ENCODE measurements at regions of chr7 and their contacts with region 1.

Region 1: DNA sequence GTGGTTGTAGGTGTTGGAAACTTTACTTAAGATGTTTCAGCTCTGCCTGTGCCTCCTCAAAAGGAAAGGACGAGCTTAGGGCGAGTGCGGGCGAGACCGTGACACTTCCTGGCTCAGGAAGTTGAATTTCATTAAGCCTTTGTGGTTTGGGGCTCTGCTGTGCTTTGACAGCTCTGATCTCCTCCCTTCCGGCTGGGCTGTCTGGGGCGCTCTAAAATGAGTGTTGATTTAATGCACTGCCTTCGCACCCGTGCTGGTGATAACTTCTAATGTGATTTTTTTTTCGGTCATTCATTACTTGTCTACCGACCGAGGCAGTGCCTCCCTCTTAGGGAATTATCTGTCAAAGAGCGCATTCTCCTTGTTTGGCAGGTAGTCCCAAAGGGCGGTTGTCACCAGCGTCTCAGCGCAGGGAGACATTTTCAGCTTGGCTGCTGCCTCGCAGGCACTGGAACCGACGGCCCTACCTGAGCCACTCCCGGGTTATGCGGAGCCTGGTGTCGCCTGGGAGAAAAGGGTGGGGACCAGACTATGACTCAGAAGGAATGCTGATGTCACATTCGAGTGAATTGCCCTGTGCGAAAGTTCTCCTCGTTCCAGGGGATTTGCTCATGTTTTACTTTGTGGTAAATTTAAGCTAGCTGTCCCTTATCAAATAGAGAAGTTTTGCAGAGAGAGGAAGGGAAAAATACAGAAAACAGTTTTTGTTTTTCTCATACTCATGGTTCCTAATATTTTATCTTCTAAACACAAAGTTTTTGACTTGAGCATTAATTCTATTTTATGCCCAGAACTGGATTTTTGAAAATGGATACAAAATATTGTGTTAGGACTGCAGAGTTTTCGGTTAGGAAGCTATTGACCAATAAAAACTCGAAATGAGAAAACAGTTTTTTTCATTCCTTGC is 920 bp downstream of the TES start:
- DNase-seq: peak; percentile 90
- H3K4me3 Mint-ChIP-seq: peak overlapping the region; percentile 95
- H3K27ac Mint-ChIP-seq: peak overlapping the region; percentile 98
- H3K4me1 Mint-ChIP-seq: peaks cover 19% of the 10 kb centered on the region
- H3K27me3 Mint-ChIP-seq: no peaks in the 10 kb centered on the region
- CTCF ChIP-seq: no peak

Region 2: DNA sequence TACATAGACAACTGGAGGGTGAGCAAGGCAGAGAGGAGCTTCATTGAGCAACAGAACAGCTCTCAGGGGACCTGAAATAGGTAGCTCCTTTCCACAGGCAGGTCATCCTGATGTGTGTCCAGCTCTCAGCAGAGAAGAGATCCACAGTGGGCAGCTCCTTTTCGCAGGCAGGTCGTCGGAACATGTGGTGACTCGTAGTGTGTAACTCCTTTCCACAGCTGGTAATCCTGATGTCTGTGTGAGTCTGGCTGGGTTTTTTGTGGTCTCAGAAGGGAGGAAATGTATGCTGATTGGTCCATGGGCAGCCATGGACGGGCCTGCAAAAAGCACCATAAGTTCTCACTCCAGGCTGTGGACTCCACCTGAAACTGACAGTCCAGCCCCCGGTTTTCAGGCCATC is 25.3 kb before region 1 on chr7:
- CTCF ChIA-PET with region 1: interaction called, 35 read pairs
- POLR2A ChIA-PET with region 1: interaction called, 92 read pairs
- intact Hi-C with region 1: no loop called
- DNase-seq: no peak
- H3K4me3 Mint-ChIP-seq: no peak overlapping the region
- H3K27ac Mint-ChIP-seq: no peak overlapping the region
- H3K4me1 Mint-ChIP-seq: no peaks in the 10 kb centered on the region
- H3K27me3 Mint-ChIP-seq: no peaks in the 10 kb centered on the region
- CTCF ChIP-seq: no peak

Region 3: GRCh38 chr7:116200963-116201362 is 10.3 kb before region 1 on chr7:
- CTCF ChIA-PET with region 1: interaction called, 10 read pairs
- POLR2A ChIA-PET with region 1: interaction called, 69 read pairs
- intact Hi-C with region 1: no loop called
- DNase-seq: no peak
- H3K4me3 Mint-ChIP-seq: no peak overlapping the region
- H3K27ac Mint-ChIP-seq: no peak overlapping the region
- H3K4me1 Mint-ChIP-seq: peaks cover 7% of the 10 kb centered on the region
- H3K27me3 Mint-ChIP-seq: no peaks in the 10 kb centered on the region
- CTCF ChIP-seq: no peak

Region 4: DNA sequence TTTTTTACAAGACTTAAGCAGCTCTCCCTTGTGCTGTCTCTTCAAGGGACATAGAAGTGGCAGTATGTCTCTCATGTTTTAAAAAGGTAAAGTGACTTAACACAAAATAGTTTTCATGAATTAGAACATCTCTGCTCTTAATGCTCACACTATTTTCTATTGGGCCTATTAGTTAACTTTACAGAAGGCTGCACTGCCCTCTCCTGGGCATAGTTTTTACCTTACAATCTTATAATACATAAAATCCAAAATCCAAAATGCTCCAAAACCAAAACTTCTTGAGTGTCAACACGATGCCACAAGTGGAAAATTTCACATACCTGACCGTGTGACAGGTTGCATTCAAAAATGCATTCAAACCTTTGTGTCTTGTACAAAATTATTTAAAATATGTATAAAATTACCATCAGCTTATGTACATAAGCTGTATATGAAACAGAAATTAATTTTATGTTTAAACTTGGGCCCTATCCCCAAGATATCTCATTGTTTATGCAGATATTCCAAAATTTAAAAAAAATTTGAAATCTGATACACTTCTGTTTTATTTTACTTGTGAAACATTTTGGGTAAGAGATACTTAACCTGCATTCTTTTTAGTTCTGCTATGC is 24.9 kb after region 1 on chr7:
- CTCF ChIA-PET with region 1: interaction called, 29 read pairs
- POLR2A ChIA-PET with region 1: interaction called, 110 read pairs
- intact Hi-C with region 1: no loop called
- DNase-seq: peak; percentile 68
- H3K4me3 Mint-ChIP-seq: no peak overlapping the region
- H3K27ac Mint-ChIP-seq: no peak overlapping the region
- H3K4me1 Mint-ChIP-seq: peaks cover 9% of the 10 kb centered on the region
- H3K27me3 Mint-ChIP-seq: no peaks in the 10 kb centered on the region
- CTCF ChIP-seq: peak; percentile 32

Region 5: GRCh38 chr7:116271963-116272839 is 60.9 kb after region 1 on chr7:
- CTCF ChIA-PET with region 1: no interaction called
- POLR2A ChIA-PET with region 1: interaction called, 15 read pairs
- intact Hi-C with region 1: no loop called
- DNase-seq: peak; percentile 96
- H3K4me3 Mint-ChIP-seq: peak overlapping the region; percentile 58
- H3K27ac Mint-ChIP-seq: peak overlapping the region; percentile 82
- H3K4me1 Mint-ChIP-seq: peaks cover 47% of the 10 kb centered on the region
- H3K27me3 Mint-ChIP-seq: no peaks in the 10 kb centered on the region
- CTCF ChIP-seq: no peak

Region 6: GRCh38 chr7:116511552-116512519 is 300.6 kb after region 1 on chr7:
- CTCF ChIA-PET with region 1: no interaction called
- POLR2A ChIA-PET with region 1: interaction called, 13 read pairs
- intact Hi-C with region 1: no loop called
- DNase-seq: peak; percentile 82
- H3K4me3 Mint-ChIP-seq: peak overlapping the region; percentile 76
- H3K27ac Mint-ChIP-seq: peak overlapping the region; percentile 82
- H3K4me1 Mint-ChIP-seq: peaks cover 35% of the 10 kb centered on the region
- H3K27me3 Mint-ChIP-seq: no peaks in the 10 kb centered on the region
- CTCF ChIP-seq: no peak